ENCODE measurements at regions of chr6 and their contacts with region 1.

Region 1: GRCh38 chr6:28218271-28219248 is 6.5 kb upstream of the ZSCAN9 start:
- DNase-seq: peak; percentile 85
- ATAC-seq: peak; percentile 94 to 97 (median 96)
- H3K4me3 ChIP-seq: peak overlapping the region; percentile 38 to 73 (median 63)
- H3K27ac ChIP-seq: peak overlapping the region in 9 of 10 donors; percentile 75 to 90 (median 80)
- H3K4me1 ChIP-seq: peaks cover 2 to 16% (median 13%) of the 10 kb centered on the region in 9 donors
- H3K27me3 ChIP-seq: peaks cover 0 to 76% (median 51%) of the 10 kb centered on the region in 7 donors
- CTCF ChIP-seq: no peak

Region 2: DNA sequence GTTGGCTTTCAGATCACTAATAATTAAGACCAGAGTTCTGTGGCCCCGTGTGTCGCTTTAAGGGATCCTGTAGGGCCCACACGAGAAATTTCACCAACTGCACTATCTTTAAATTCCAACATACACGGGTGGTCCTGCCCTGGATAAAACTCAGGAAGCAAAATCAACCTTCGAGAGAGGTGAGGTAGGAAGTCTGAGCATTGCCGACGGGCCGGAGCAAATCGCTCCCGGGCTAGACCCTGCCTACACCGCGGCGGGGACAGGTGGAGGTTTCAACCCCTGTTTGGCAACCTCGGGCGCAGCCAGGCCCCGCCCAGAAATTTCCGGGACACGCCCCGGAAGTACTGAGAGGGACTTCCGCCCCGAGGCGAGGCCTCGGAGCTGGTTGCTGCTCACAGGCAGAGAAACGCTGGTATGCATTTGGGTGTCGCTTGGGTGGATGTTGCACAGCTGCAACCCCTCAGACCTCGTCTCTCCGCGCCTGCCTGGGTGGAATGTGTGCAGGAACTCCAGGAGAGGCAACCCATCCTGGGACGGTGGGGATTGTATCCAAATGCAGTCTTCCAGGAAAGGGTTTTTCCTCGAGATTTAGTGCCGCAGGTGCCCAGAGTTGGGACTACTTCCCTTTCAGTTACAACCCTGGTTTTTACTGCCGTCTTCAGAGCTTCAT is 57.0 kb before region 1 on chr6:
- intact Hi-C with region 1: loop called in 1 of 10 experiments (anchors 10 kb)
- DNase-seq: peak; percentile 52 to 79
- ATAC-seq: peak; percentile 85 to 98 (median 93)
- H3K4me3 ChIP-seq: peak overlapping the region; percentile 23 to 64 (median 58)
- H3K27ac ChIP-seq: peak overlapping the region in 2 of 10 donors; percentile 1 to 17
- H3K4me1 ChIP-seq: peaks cover 0 to 15% (median 8%) of the 10 kb centered on the region in 9 donors
- H3K27me3 ChIP-seq: no peaks in the 10 kb centered on the region
- CTCF ChIP-seq: no peak

Region 3: GRCh38 chr6:28252009-28252975 is 33.7 kb after region 1 on chr6 and contains the start of gene ZKSCAN4:
- intact Hi-C with region 1: loop called in 1 of 10 experiments (anchors 5 kb)
- DNase-seq: peak; percentile 46 to 94
- ATAC-seq: peak; percentile 95 to 99 (median 98)
- H3K4me3 ChIP-seq: peak within 1 kb of the TSS; percentile 59 to 98 (median 89)
- H3K27ac ChIP-seq: peak within 1 kb of the TSS in 9 of 10 donors; percentile 28 to 87 (median 68)
- H3K4me1 ChIP-seq: peaks cover 9 to 36% (median 22%) of the 10 kb centered on the region in 9 donors
- H3K27me3 ChIP-seq: no peaks in the 10 kb centered on the region
- CTCF ChIP-seq: no peak
- total RNA-seq, gene ZKSCAN4: 0.55 to 3.6 (median 2.9) TPM